ENCODE measurements at regions of chr2 and their contacts with region 1.

Region 1: DNA sequence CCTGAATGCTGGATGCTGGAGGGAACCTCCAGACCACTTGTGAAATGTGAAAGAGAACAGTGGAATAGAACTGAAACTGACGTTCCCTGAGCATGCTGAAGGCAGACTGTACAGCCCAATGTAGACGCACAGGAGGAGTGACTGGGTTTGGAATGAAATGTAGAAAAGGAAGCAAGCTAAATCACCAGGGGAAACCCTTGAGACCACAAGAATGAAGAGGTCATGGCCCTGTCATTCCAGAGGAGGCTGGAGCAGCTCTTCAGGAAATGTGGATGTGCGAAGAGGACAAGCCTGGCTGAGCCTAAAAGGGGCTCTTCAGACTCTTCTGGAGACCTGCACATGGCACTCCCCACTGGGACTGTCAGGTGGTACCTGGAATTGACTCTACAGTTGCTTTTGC is 118.5 kb upstream of the ALPP start:
- DNase-seq: no peak
- H3K4me3 ChIP-seq: no peak overlapping the region
- H3K27ac ChIP-seq: no peak overlapping the region
- H3K4me1 ChIP-seq: peaks cover 0 to 6% of the 10 kb centered on the region in 2 donors
- H3K27me3 ChIP-seq: no peaks in the 10 kb centered on the region
- CTCF ChIP-seq: no peak
- POLR2A ChIP-seq: no peak

Region 2: DNA sequence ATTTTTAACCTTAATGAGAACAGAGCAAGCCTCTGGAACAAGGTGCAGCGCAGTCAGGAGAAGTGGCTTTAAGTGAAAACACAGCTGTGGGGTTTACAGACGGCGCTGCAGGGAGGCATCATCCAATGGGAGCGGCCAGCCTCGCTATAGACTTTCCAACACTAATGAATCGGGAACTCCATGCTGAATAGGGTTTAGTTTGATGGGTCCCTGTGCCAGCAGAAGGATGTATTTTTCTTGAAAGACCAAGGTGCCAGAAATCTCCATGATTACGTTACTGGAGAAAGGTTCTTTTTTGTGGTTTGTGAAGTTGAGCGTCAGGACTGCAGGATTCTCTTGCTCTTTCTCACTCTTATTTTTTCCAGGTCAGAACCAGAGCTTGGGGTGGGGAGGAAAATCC is 30.6 kb after region 1 on chr2:
- intact Hi-C with region 1: loop called (anchors 1 kb)
- DNase-seq: no peak
- H3K4me3 ChIP-seq: no peak overlapping the region
- H3K27ac ChIP-seq: no peak overlapping the region
- H3K4me1 ChIP-seq: no peaks in the 10 kb centered on the region
- H3K27me3 ChIP-seq: no peaks in the 10 kb centered on the region
- CTCF ChIP-seq: no peak
- POLR2A ChIP-seq: no peak

Region 3: GRCh38 chr2:233152541-233152940 is 892.5 kb after region 1 on chr2:
- intact Hi-C with region 1: no loop called
- DNase-seq: peak in 1 of 2 donors; percentile 42
- H3K4me3 ChIP-seq: no peak overlapping the region
- H3K27ac ChIP-seq: no peak overlapping the region
- H3K4me1 ChIP-seq: no peaks in the 10 kb centered on the region
- H3K27me3 ChIP-seq: no peaks in the 10 kb centered on the region
- CTCF ChIP-seq: no peak
- POLR2A ChIP-seq: no peak